Activated B cell treated with CpG ODN at 0.5 μM for 24 hours (primary cell): ENCODE measurements at regions of chr6 and their contacts with region 1.

Region 1: GRCh38 chr6:63764318-63764916 is 128.8 kb downstream of the PHF3 start:
- DNase-seq: no peak
- ATAC-seq: no peak
- H3K4me3 Mint-ChIP-seq: no peak overlapping the region
- H3K27ac Mint-ChIP-seq: no peak overlapping the region
- H3K4me1 Mint-ChIP-seq: no peaks in the 10 kb centered on the region
- H3K27me3 Mint-ChIP-seq: peaks cover 12% of the 10 kb centered on the region
- CTCF ChIP-seq: no peak

Region 2: GRCh38 chr6:63307581-63308246 is 456.7 kb before region 1 on chr6:
- CTCF ChIA-PET with region 1: interaction called, 8 read pairs
- POLR2A ChIA-PET with region 1: no interaction called
- intact Hi-C with region 1: loop called (anchors 1 kb)
- DNase-seq: no peak
- ATAC-seq: no peak
- H3K4me3 Mint-ChIP-seq: no peak overlapping the region
- H3K27ac Mint-ChIP-seq: no peak overlapping the region
- H3K4me1 Mint-ChIP-seq: no peaks in the 10 kb centered on the region
- H3K27me3 Mint-ChIP-seq: no peaks in the 10 kb centered on the region
- CTCF ChIP-seq: no peak

Region 3: DNA sequence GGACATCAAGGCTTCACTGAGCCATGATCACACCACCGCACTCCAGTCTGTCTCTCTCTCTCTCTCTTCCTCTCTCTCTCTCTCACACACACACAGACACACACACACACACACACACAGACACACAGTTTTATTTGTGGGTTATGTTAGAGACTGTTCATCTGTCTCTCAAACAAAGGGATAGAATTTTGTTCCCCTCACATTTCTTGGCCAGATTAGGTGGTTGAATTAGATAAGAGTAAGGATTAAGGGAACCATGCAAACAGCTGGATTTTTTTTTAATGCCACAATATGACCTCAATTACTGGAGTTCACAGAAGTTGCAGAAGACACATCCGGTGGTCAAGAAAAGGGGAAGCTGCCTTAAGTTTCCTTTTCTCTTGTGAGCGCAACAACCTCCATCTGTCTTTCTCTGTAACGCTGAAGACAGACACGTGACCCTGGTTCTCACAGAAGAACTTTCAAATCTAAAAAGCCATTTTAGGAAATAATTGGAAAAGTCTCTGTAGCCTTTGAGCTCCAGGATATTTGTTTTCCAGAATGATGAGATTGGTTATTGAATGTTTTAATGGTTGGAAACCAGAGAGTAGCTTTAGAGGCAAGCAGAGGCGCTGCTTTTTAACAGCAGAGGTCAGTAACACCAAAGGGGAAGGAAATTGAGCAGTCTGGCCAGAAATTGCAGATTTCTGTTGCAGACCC is 411.7 kb before region 1 on chr6:
- CTCF ChIA-PET with region 1: interaction called, 23 read pairs
- POLR2A ChIA-PET with region 1: no interaction called
- intact Hi-C with region 1: loop called (anchors 1 kb)
- DNase-seq: no peak
- ATAC-seq: peak; percentile 77
- H3K4me3 Mint-ChIP-seq: peak overlapping the region; percentile 69
- H3K27ac Mint-ChIP-seq: peak overlapping the region; percentile 63
- H3K4me1 Mint-ChIP-seq: peaks cover 22% of the 10 kb centered on the region
- H3K27me3 Mint-ChIP-seq: no peaks in the 10 kb centered on the region
- CTCF ChIP-seq: no peak

Region 4: GRCh38 chr6:63839485-63839884 is 75.1 kb after region 1 on chr6:
- CTCF ChIA-PET with region 1: no interaction called
- POLR2A ChIA-PET with region 1: no interaction called
- intact Hi-C with region 1: no loop called
- DNase-seq: no peak
- ATAC-seq: no peak
- H3K4me3 Mint-ChIP-seq: no peak overlapping the region
- H3K27ac Mint-ChIP-seq: no peak overlapping the region
- H3K4me1 Mint-ChIP-seq: no peaks in the 10 kb centered on the region
- H3K27me3 Mint-ChIP-seq: no peaks in the 10 kb centered on the region
- CTCF ChIP-seq: no peak

Region 5: GRCh38 chr6:63943826-63944225 is 179.4 kb after region 1 on chr6:
- CTCF ChIA-PET with region 1: no interaction called
- POLR2A ChIA-PET with region 1: no interaction called
- intact Hi-C with region 1: no loop called
- DNase-seq: no peak
- ATAC-seq: no peak
- H3K4me3 Mint-ChIP-seq: no peak overlapping the region
- H3K27ac Mint-ChIP-seq: no peak overlapping the region
- H3K4me1 Mint-ChIP-seq: no peaks in the 10 kb centered on the region
- H3K27me3 Mint-ChIP-seq: no peaks in the 10 kb centered on the region
- CTCF ChIP-seq: no peak